ENCODE measurements at regions of chr20 and their contacts with region 1.

Region 1: GRCh38 chr20:46089417-46090388 is at the start of gene NCOA5:
- DNase-seq: peak; percentile 96
- H3K4me3 Mint-ChIP-seq: peak within 1 kb of the TSS; percentile 83
- H3K27ac Mint-ChIP-seq: peak within 1 kb of the TSS; percentile 88
- H3K4me1 Mint-ChIP-seq: peaks cover 44% of the 10 kb centered on the region
- H3K27me3 Mint-ChIP-seq: no peaks in the 10 kb centered on the region

Region 2: GRCh38 chr20:46022411-46023147 is 67.1 kb before region 1 on chr20:
- CTCF ChIA-PET with region 1: interaction called, 17 read pairs
- DNase-seq: peak; percentile 80
- H3K4me3 Mint-ChIP-seq: peak overlapping the region; percentile 59
- H3K27ac Mint-ChIP-seq: no peak overlapping the region
- H3K4me1 Mint-ChIP-seq: peaks cover 25% of the 10 kb centered on the region
- H3K27me3 Mint-ChIP-seq: peaks cover 80% of the 10 kb centered on the region

Region 3: GRCh38 chr20:46034039-46034438 is 55.7 kb before region 1 on chr20:
- CTCF ChIA-PET with region 1: no interaction called
- DNase-seq: no peak
- H3K4me3 Mint-ChIP-seq: no peak overlapping the region
- H3K27ac Mint-ChIP-seq: no peak overlapping the region
- H3K4me1 Mint-ChIP-seq: no peaks in the 10 kb centered on the region
- H3K27me3 Mint-ChIP-seq: peaks cover 80% of the 10 kb centered on the region

Region 4: GRCh38 chr20:46199198-46199597 is 109.5 kb after region 1 on chr20:
- CTCF ChIA-PET with region 1: no interaction called
- DNase-seq: no peak
- H3K4me3 Mint-ChIP-seq: no peak overlapping the region
- H3K27ac Mint-ChIP-seq: no peak overlapping the region
- H3K4me1 Mint-ChIP-seq: no peaks in the 10 kb centered on the region
- H3K27me3 Mint-ChIP-seq: peaks cover 73% of the 10 kb centered on the region